ENCODE measurements at regions of chr18 and their contacts with region 1.

Region 1: GRCh38 chr18:22570492-22570891 is 152.8 kb upstream of the CTAGE1 start:
- DNase-seq: no peak
- ATAC-seq: no peak

Region 2: GRCh38 chr18:21997207-21998143 is 573.0 kb before region 1 on chr18:
- intact Hi-C with region 1: loop called (anchors 10 kb)
- DNase-seq: no peak
- ATAC-seq: no peak

Measured in sciatic nerve (tissue), 2 donors.